ENCODE measurements at regions of chr11 and their contacts with region 1.

Region 1: GRCh38 chr11:118592616-118593367 is 14.6 kb upstream of the PHLDB1 start:
- DNase-seq: no peak
- ATAC-seq: no peak
- H3K4me3 ChIP-seq: no peak overlapping the region
- H3K27ac ChIP-seq: no peak overlapping the region
- H3K4me1 ChIP-seq: peaks cover 9% of the 10 kb centered on the region; the same call in 1 of the 2 replicates
- H3K27me3 ChIP-seq: no peaks in the 10 kb centered on the region
- CTCF ChIP-seq: no peak
- EP300 ChIP-seq: no peak
- POLR2A ChIP-seq: no peak
- RAD21 ChIP-seq: no peak

Region 2: GRCh38 chr11:118605116-118605867 is 12.5 kb after region 1 on chr11:
- CTCF ChIA-PET with region 1: interaction called, 22 read pairs
- POLR2A ChIA-PET with region 1: no interaction called
- RAD21 ChIA-PET with region 1: interaction called, 9 read pairs
- SMC1A ChIA-PET with region 1: interaction called, 5 read pairs
- in situ Hi-C with region 1: no loop called
- intact Hi-C with region 1: no loop called
- DNase-seq: no peak
- ATAC-seq: no peak
- H3K4me3 ChIP-seq: no peak overlapping the region
- H3K27ac ChIP-seq: no peak overlapping the region
- H3K4me1 ChIP-seq: peaks cover 4% of the 10 kb centered on the region
- H3K27me3 ChIP-seq: peaks cover 15 to 23% of the 10 kb centered on the region in 2 experiments; a peak in 3 of 4 replicates
- CTCF ChIP-seq: no peak
- EP300 ChIP-seq: no peak
- POLR2A ChIP-seq: no peak
- RAD21 ChIP-seq: no peak

Region 3: GRCh38 chr11:118610804-118611795 is 18.3 kb after region 1 on chr11:
- CTCF ChIA-PET with region 1: interaction called, 25 read pairs
- POLR2A ChIA-PET with region 1: no interaction called
- RAD21 ChIA-PET with region 1: interaction called, 4 read pairs
- SMC1A ChIA-PET with region 1: interaction called, 5 read pairs
- in situ Hi-C with region 1: no loop called
- intact Hi-C with region 1: no loop called
- DNase-seq: no peak
- ATAC-seq: peak; percentile 84
- H3K4me3 ChIP-seq: no peak overlapping the region; the same call in 1 of the 2 replicates
- H3K27ac ChIP-seq: no peak overlapping the region
- H3K4me1 ChIP-seq: peaks cover 8% of the 10 kb centered on the region
- H3K27me3 ChIP-seq: peaks cover 22 to 36% of the 10 kb centered on the region in 2 experiments; a peak in 3 of 4 replicates
- CTCF ChIP-seq: peak; percentile 72 to 88 (median 87); a peak in 5 of 6 replicates
- EP300 ChIP-seq: no peak
- POLR2A ChIP-seq: no peak
- RAD21 ChIP-seq: peak; percentile 46

Measured in GM12878 (cell line).